Heart right ventricle (tissue), 16 donors: ENCODE measurements at regions of chr11 and their contacts with region 1.

Region 1: DNA sequence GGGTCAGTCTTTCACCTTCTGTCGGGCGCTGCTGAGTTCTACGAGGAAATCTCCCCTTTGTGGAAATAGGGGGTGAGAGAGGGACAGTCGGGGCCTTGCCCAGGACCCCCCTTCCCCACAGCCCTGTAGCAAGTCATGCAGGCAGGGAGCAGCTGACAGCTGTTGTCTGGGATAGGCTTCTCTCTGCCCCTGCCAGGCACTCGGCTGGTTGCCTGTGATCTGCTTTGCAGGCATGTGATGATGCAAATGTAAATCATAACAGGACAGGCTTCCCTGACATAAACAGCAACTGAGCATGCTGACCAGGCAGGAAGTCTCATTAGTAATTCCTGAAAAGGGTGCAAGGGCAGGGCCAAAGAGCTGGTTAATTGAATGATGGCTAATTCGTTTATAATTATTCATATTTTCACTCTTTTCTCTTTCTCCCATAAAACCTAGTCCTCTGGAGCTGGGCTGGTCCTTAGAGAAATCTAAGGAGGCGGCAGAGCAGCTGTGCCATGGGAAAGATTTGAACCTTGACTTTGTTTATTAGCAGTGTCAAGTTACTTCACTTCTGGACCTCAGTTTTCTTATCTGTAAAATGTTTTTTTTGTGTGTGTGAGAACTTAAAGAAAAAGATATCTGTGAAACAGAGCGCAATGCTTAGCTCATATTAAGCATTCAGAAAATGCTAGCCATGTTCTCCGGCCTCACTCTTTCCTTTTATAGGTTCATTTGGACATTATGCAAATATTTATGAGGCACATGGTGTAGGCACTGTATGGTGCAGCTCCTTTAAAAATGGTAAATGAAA is 129.7 kb downstream of the LDLRAD3 start:
- DNase-seq: peak; percentile 25 to 46
- ATAC-seq: peak; percentile 50 to 92 (median 86)
- H3K4me3 ChIP-seq: no peak overlapping the region
- H3K27ac ChIP-seq: peak overlapping the region in 6 of 10 donors; percentile 4 to 69 (median 35)
- H3K4me1 ChIP-seq: peaks cover 0 to 44% (median 13%) of the 10 kb centered on the region in 9 donors
- H3K27me3 ChIP-seq: no peaks in the 10 kb centered on the region
- CTCF ChIP-seq: no peak

Region 2: GRCh38 chr11:35066783-35067423 is 1006.7 kb before region 1 on chr11:
- intact Hi-C with region 1: loop called in 1 of 10 experiments (anchors 10 kb)
- DNase-seq: no peak
- ATAC-seq: peak in 1 of 8 donors; percentile 25
- H3K4me3 ChIP-seq: no peak overlapping the region
- H3K27ac ChIP-seq: peak overlapping the region in 1 of 10 donors; percentile 21
- H3K4me1 ChIP-seq: peaks cover 0 to 33% (median 0%) of the 10 kb centered on the region in 9 donors
- H3K27me3 ChIP-seq: no peaks in the 10 kb centered on the region
- CTCF ChIP-seq: no peak

Region 3: GRCh38 chr11:36048496-36049247 is 24.9 kb before region 1 on chr11:
- intact Hi-C with region 1: no loop called
- DNase-seq: no peak
- ATAC-seq: no peak
- H3K4me3 ChIP-seq: no peak overlapping the region
- H3K27ac ChIP-seq: no peak overlapping the region
- H3K4me1 ChIP-seq: no peaks in the 10 kb centered on the region
- H3K27me3 ChIP-seq: peaks cover 0 to 8% (median 0%) of the 10 kb centered on the region in 7 donors
- CTCF ChIP-seq: no peak

Region 4: DNA sequence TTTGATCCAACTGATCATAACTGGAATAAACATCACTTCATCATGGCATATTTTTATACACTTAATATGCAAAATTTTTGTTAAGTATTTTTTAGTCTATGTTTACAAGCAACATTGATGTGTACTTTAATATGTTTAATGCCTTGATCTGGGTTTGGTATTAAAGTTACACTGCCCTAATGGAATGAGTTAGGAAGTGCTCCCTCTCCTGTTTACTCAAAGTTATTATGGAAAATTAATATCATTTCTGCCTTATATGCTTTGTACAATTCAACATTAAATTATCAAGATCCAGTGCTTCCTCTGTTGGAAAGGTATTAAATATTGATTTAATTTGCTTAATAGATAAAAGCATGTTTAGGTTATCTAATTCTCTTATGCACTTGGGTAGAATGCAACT is 1451.7 kb after region 1 on chr11:
- intact Hi-C with region 1: no loop called
- DNase-seq: no peak
- ATAC-seq: no peak
- H3K4me3 ChIP-seq: no peak overlapping the region
- H3K27ac ChIP-seq: no peak overlapping the region
- H3K4me1 ChIP-seq: no peaks in the 10 kb centered on the region
- H3K27me3 ChIP-seq: no peaks in the 10 kb centered on the region
- CTCF ChIP-seq: peak in 1 of 9 donors; percentile 19